AG04450 (cell line): ENCODE measurements at regions of chr19 and their contacts with region 1.

Region 1: GRCh38 chr19:17751103-17751911 is at the start of gene FCHO1:
- DNase-seq: no peak
- H3K4me3 ChIP-seq: no peak within 1 kb of the TSS
- H3K27ac ChIP-seq: no peak within 1 kb of the TSS
- H3K27me3 ChIP-seq: peaks cover 3% of the 10 kb centered on the region
- CTCF ChIP-seq: no peak
- polyA plus RNA-seq, gene FCHO1: 0.15 and 0.35 TPM in 2 replicates

Region 2: DNA sequence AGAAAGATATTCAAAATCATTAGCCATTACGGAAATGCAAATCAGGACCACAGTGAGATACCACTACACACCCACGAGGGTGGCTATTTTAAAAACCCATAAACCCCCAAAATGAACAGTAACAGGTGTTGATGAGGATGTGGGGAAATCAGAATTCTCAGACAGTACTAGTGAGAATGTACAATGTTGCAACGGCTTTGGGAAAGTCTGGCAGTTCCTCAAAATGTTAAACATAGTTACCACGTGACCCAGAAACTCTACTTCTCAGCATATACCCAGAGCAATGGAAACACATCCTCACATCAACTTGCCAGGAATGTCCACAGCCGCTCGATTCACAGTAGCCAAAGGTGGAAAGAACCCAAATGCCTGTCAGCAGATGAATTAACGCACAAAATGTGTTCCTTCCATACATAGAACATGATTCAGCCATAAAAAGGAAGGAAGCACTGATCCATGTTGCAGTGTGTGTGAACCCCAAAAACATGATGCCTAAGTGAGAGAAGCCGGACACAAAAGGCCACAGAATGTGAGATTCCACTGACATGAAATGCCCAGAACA is 381.2 kb before region 1 on chr19:
- CTCF ChIA-PET with region 1: no interaction called
- POLR2A ChIA-PET with region 1: interaction called, 12 read pairs
- DNase-seq: peak; percentile 32
- H3K4me3 ChIP-seq: no peak overlapping the region
- H3K27ac ChIP-seq: peak overlapping the region; percentile 21
- H3K27me3 ChIP-seq: peaks cover 3% of the 10 kb centered on the region
- CTCF ChIP-seq: no peak

Region 3: GRCh38 chr19:17718947-17719711 is 32.2 kb before region 1 on chr19 and contains the start of gene MAP1S:
- CTCF ChIA-PET with region 1: no interaction called
- POLR2A ChIA-PET with region 1: interaction called, 12 read pairs
- DNase-seq: no peak
- H3K4me3 ChIP-seq: peak within 1 kb of the TSS; percentile 87
- H3K27ac ChIP-seq: no peak within 1 kb of the TSS
- H3K27me3 ChIP-seq: no peaks in the 10 kb centered on the region
- CTCF ChIP-seq: no peak
- polyA plus RNA-seq, gene MAP1S: 8.2 and 14.3 TPM in 2 replicates